ENCODE measurements at regions of chr7 and their contacts with region 1.

Region 1: GRCh38 chr7:112414855-112415490 is 35.3 kb upstream of the IFRD1 start:
- DNase-seq: peak in 1 of 2 experiments; percentile 37
- H3K4me3 ChIP-seq: no peak overlapping the region
- H3K4me3 Mint-ChIP-seq: no peak overlapping the region
- H3K27ac Mint-ChIP-seq: no peak overlapping the region
- H3K4me1 ChIP-seq: no peaks in the 10 kb centered on the region
- H3K4me1 Mint-ChIP-seq: no peaks in the 10 kb centered on the region
- H3K27me3 ChIP-seq: no peaks in the 10 kb centered on the region
- H3K27me3 Mint-ChIP-seq: peaks cover 11% of the 10 kb centered on the region
- CTCF ChIP-seq: peak; percentile 68 to 70

Region 2: GRCh38 chr7:111741811-111742240 is 673.1 kb before region 1 on chr7:
- CTCF ChIA-PET with region 1: interaction called, 3 read pairs
- POLR2A ChIA-PET with region 1: no interaction called
- intact Hi-C with region 1: loop called (anchors 1 kb)
- DNase-seq: peak; percentile 65 to 67
- H3K4me3 ChIP-seq: no peak overlapping the region
- H3K4me3 Mint-ChIP-seq: no peak overlapping the region
- H3K27ac Mint-ChIP-seq: no peak overlapping the region
- H3K4me1 ChIP-seq: peaks cover 6% of the 10 kb centered on the region; the same call in 1 of the 2 replicates
- H3K4me1 Mint-ChIP-seq: peaks cover 8% of the 10 kb centered on the region
- H3K27me3 ChIP-seq: no peaks in the 10 kb centered on the region
- H3K27me3 Mint-ChIP-seq: no peaks in the 10 kb centered on the region
- CTCF ChIP-seq: peak; percentile 69 to 70

Region 3: GRCh38 chr7:111855161-111855856 is 559.7 kb before region 1 on chr7:
- CTCF ChIA-PET with region 1: no interaction called
- POLR2A ChIA-PET with region 1: no interaction called
- intact Hi-C with region 1: loop called (anchors 2 kb)
- DNase-seq: peak; percentile 59 to 61
- H3K4me3 ChIP-seq: no peak overlapping the region
- H3K4me3 Mint-ChIP-seq: no peak overlapping the region
- H3K27ac Mint-ChIP-seq: no peak overlapping the region
- H3K4me1 ChIP-seq: peaks cover 10% of the 10 kb centered on the region
- H3K4me1 Mint-ChIP-seq: peaks cover 9% of the 10 kb centered on the region
- H3K27me3 ChIP-seq: no peaks in the 10 kb centered on the region
- H3K27me3 Mint-ChIP-seq: no peaks in the 10 kb centered on the region
- CTCF ChIP-seq: peak; percentile 46 to 75

Region 4: GRCh38 chr7:112080441-112080840 is 334.5 kb before region 1 on chr7:
- CTCF ChIA-PET with region 1: no interaction called
- POLR2A ChIA-PET with region 1: no interaction called
- intact Hi-C with region 1: loop called (anchors 10 kb)
- DNase-seq: no peak
- H3K4me3 ChIP-seq: no peak overlapping the region
- H3K4me3 Mint-ChIP-seq: no peak overlapping the region
- H3K27ac Mint-ChIP-seq: no peak overlapping the region
- H3K4me1 ChIP-seq: no peaks in the 10 kb centered on the region
- H3K4me1 Mint-ChIP-seq: no peaks in the 10 kb centered on the region
- H3K27me3 ChIP-seq: no peaks in the 10 kb centered on the region
- H3K27me3 Mint-ChIP-seq: no peaks in the 10 kb centered on the region
- CTCF ChIP-seq: no peak

Region 5: GRCh38 chr7:112495810-112496462 is 81.0 kb after region 1 on chr7:
- CTCF ChIA-PET with region 1: no interaction called
- POLR2A ChIA-PET with region 1: no interaction called
- intact Hi-C with region 1: loop called (anchors 5 kb)
- DNase-seq: peak; percentile 62 to 63
- H3K4me3 ChIP-seq: no peak overlapping the region
- H3K4me3 Mint-ChIP-seq: no peak overlapping the region
- H3K27ac Mint-ChIP-seq: no peak overlapping the region
- H3K4me1 ChIP-seq: no peaks in the 10 kb centered on the region
- H3K4me1 Mint-ChIP-seq: peaks cover 13% of the 10 kb centered on the region
- H3K27me3 ChIP-seq: no peaks in the 10 kb centered on the region
- H3K27me3 Mint-ChIP-seq: peaks cover 3% of the 10 kb centered on the region
- CTCF ChIP-seq: peak; percentile 56 to 74

Region 6: DNA sequence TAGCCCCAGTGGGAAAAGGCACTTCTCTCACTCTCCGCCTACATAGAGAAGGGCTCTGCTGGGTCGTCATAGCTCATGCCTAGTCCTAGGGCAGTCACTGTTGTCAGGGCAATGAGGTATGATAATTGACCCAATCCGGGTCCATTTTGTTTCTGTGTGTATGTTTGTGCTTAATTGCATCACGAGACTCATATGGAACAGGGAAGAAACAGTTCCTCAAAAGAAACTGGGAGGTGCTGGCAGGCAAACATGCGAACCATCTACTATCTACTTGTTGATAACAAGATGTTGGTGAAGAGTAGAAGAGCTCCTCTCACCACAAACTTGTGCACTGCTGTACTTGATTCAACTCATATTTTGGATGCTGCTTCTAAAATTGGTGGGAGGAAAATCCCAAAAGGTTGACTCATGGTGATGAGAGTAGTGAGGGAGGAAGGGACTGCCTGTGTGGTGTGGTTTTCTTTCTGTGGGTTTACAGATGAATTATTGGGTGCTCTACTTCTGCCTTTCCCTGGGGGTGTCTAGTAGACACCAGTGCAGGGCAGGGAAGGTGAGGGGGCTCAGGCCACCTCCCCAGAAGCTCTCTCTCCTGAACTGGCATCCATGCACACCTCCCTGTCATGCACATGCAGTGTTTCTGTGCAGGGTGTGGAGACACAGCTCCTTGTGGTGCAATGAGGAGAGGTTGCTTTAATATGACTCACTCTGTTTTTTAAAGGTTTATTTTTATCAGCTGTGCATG is 95.2 kb after region 1 on chr7:
- CTCF ChIA-PET with region 1: no interaction called
- POLR2A ChIA-PET with region 1: no interaction called
- intact Hi-C with region 1: no loop called
- DNase-seq: no peak
- H3K4me3 ChIP-seq: no peak overlapping the region
- H3K4me3 Mint-ChIP-seq: no peak overlapping the region
- H3K27ac Mint-ChIP-seq: no peak overlapping the region
- H3K4me1 ChIP-seq: 0 out of 2 replicates have a peak, but pooled peaks cover 9% of the 10 kb centered on the region
- H3K4me1 Mint-ChIP-seq: no peaks in the 10 kb centered on the region
- H3K27me3 ChIP-seq: no peaks in the 10 kb centered on the region
- H3K27me3 Mint-ChIP-seq: peaks cover 3% of the 10 kb centered on the region
- CTCF ChIP-seq: no peak